ENCODE measurements at regions of chr20 and their contacts with region 1.

Region 1: GRCh38 chr20:33666293-33667244 is at the start of gene ACTL10:
- DNase-seq: peak in 1 of 2 donors; percentile 98
- H3K4me3 ChIP-seq: peak within 1 kb of the TSS; percentile 66 to 68
- H3K27ac ChIP-seq: peak within 1 kb of the TSS; percentile 91
- H3K4me1 ChIP-seq: peaks cover 45% of the 10 kb centered on the region
- H3K27me3 ChIP-seq: no peaks in the 10 kb centered on the region
- CTCF ChIP-seq: peak in 1 of 3 experiments; percentile 27
- POLR2A ChIP-seq: peak in 1 of 2 donors; percentile 78
- total RNA-seq, gene ACTL10: 1.5 TPM

Region 2: GRCh38 chr20:31894980-31895675 is 1771.4 kb before region 1 on chr20:
- intact Hi-C with region 1: no loop called
- DNase-seq: peak in 1 of 2 donors; percentile 93
- H3K4me3 ChIP-seq: no peak overlapping the region
- H3K27ac ChIP-seq: peak overlapping the region; percentile 47
- H3K4me1 ChIP-seq: no peaks in the 10 kb centered on the region
- H3K27me3 ChIP-seq: no peaks in the 10 kb centered on the region
- CTCF ChIP-seq: no peak
- POLR2A ChIP-seq: no peak

Region 3: DNA sequence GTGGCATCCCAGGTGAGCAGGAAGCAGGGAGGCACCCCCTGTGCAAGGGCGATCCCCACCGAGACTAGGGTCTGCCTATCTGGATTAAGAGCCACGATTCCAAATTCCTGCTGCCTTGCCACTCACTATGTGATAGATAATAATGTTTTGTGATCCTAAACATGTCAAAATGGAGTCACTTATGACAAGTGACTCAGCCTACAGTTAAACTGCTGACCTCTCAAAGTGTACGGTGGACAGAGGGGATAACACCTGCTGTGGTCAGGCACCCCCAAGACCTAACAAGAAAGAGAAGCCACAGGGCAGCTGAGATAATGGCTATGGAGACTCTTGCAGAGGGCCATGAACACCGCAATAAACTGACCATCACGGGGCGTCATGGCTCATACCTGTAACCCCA is 207.0 kb before region 1 on chr20:
- intact Hi-C with region 1: loop called (anchors 5 kb)
- DNase-seq: no peak
- H3K4me3 ChIP-seq: no peak overlapping the region
- H3K27ac ChIP-seq: no peak overlapping the region
- H3K4me1 ChIP-seq: no peaks in the 10 kb centered on the region
- H3K27me3 ChIP-seq: no peaks in the 10 kb centered on the region
- CTCF ChIP-seq: no peak
- POLR2A ChIP-seq: no peak

Measured in vagina (tissue), 2 donors.